ENCODE measurements at regions of chr4 and their contacts with region 1.

Region 1: DNA sequence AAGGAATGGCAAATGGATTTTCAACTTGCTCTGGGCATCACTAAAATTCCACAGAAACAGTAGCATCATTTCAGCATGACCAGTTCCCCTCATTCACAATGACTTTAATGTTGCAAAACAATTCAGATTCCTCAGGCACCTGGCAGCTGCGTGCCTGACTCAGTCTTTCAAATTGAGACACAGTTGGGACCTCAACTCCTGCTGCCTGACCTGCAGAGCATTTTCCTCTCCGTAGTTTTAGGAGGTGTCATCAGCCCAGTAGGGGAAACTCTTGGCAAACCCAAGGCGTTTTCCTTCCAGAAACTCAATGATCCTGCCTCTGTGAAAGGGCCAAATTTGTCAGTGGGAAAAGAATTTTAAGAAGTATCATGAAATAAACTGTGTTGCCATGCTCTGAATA is 388.9 kb downstream of the SPRY1 start:
- DNase-seq: peak; percentile 63
- ATAC-seq: peak; percentile 75 to 82

Region 2: DNA sequence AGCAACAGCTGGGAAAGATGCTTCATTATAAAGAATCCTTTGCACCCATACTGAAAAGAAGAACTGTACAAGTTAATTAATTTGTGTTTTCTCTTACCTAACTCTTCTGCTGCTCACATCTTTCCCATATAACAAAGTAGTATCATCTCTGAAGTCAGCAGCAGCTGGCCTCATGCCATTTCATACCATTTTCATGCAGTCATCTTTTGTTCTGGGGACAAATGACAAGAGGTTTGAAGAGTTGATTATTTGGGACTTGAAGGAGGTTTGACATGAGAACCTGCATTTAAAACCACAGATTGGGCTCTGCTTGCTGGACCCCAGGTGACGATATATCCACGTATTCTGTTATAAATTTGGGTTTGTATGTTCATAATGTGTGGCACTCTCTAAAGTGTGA is 41.4 kb after region 1 on chr4:
- intact Hi-C with region 1: loop called in 1 of 2 experiments (anchors 5 kb)
- DNase-seq: peak; percentile 54
- ATAC-seq: peak; percentile 27 to 35